ENCODE measurements at regions of chr17 and their contacts with region 1.

Region 1: GRCh38 chr17:50114849-50115357 is 15.1 kb downstream of the SAMD14 start:
- DNase-seq: peak in 6 of 9 donors; percentile 35 to 47 (median 41)
- ATAC-seq: peak; percentile 48
- H3K4me3 ChIP-seq: no peak overlapping the region
- H3K4me3 Mint-ChIP-seq: peak overlapping the region in 2 of 10 donors; percentile 5 to 32
- H3K27ac ChIP-seq: no peak overlapping the region
- H3K27ac Mint-ChIP-seq: peak overlapping the region in 2 of 9 donors; percentile 61 to 68
- H3K4me1 ChIP-seq: peaks cover 0 to 4% of the 10 kb centered on the region in 2 donors
- H3K4me1 Mint-ChIP-seq: peaks cover 7 to 18% (median 12%) of the 10 kb centered on the region in 7 donors
- H3K27me3 ChIP-seq: peaks cover 4 to 9% of the 10 kb centered on the region in 2 donors
- H3K27me3 Mint-ChIP-seq: peaks cover 14 to 44% (median 26%) of the 10 kb centered on the region in 5 donors

Region 2: DNA sequence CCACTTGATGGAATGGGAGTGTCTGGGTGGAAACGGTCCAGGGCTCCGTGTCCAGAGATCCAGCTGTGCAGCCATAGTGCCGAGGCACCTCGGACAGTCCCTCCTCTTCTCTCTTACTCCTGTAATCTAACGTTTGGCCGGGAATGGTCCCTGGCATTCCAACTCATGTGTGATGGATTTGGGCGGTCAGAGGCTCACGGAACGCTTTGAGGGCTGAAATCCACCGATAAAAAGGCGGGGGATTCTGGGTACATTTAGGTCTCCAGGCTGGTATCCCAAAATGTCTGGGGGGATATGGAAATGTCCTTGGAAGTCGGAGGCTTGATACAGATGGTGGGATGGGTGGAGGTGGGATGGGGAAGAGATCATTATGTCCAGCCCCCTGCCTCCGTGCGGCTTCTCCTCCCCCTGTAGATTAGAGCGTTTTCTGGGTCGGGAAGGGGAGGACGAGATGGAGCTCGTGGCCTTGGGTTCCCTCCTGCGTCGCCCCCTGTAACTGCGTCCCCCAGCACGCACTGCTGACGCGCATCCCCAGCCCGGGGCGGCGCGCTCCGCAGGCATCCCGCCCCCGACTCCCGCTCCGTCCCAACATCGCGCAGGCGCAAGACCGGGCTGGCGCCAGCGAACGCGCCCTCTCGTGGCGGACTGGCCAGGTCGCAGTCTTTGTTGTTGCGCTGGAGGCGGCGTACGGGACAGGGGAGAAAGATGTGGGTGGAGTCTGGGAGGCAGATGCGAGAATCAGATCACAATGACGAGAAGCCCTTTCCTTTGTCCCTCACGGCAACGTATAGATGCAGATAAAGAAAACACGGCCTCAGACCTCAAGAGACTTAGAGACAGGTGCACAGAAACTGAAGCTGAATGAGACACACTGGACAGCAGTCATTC is 46.4 kb after region 1 on chr17:
- CTCF ChIA-PET with region 1: interaction called, 8 read pairs
- POLR2A ChIA-PET with region 1: interaction called, 3 read pairs
- intact Hi-C with region 1: loop called (anchors 1 kb)
- DNase-seq: peak; percentile 89 to 98 (median 93)
- ATAC-seq: peak; percentile 99
- H3K4me3 ChIP-seq: peak overlapping the region; percentile 63
- H3K4me3 Mint-ChIP-seq: peak overlapping the region; percentile 66 to 87 (median 78)
- H3K27ac ChIP-seq: peak overlapping the region; percentile 70
- H3K27ac Mint-ChIP-seq: peak overlapping the region; percentile 64 to 99 (median 97)
- H3K4me1 ChIP-seq: peaks cover 18 to 34% of the 10 kb centered on the region in 2 donors
- H3K4me1 Mint-ChIP-seq: peaks cover 22 to 47% (median 39%) of the 10 kb centered on the region in 7 donors
- H3K27me3 ChIP-seq: no peaks in the 10 kb centered on the region
- H3K27me3 Mint-ChIP-seq: peaks cover 0 to 12% (median 0%) of the 10 kb centered on the region in 5 donors

Region 3: DNA sequence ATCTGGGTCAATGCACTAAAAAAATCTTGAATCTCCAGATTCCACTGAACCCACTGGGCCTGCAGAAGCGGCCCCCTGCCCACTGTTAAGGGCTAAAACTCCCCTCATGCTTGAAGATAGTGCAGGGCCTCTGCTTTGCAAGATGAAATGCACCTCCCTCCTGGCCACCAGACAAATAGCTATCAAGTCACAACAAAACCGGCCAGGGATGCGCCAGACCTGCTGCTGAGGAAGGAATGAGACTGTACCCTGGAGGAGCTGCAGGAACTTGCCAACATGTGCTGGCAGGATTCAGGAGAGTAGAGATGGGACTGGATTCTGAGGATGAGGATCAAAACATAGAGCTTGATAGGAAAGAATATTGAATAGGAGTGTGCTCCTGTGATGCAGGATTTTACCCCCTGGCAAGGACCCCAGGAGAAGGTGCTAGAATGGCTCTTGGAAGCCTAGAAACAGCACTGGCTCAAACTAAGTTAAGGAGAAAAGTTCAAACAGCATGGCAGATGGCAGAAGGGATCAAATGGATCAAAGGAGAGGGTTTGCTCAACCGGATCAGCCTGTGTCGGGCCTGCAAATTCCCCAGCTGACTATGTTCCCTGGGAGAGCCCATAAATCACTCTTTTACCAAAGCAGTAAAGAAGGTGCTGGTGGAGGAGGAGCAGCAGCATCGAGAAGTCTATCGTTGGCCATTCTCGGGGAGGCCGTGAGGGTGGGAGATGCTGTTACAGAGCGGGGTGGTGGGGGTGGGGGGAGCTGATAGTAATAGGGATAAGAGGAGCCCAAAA is 203.8 kb after region 1 on chr17:
- CTCF ChIA-PET with region 1: no interaction called
- POLR2A ChIA-PET with region 1: no interaction called
- intact Hi-C with region 1: no loop called
- DNase-seq: no peak
- ATAC-seq: no peak
- H3K4me3 ChIP-seq: no peak overlapping the region
- H3K4me3 Mint-ChIP-seq: no peak overlapping the region
- H3K27ac ChIP-seq: no peak overlapping the region
- H3K27ac Mint-ChIP-seq: no peak overlapping the region
- H3K4me1 ChIP-seq: no peaks in the 10 kb centered on the region
- H3K4me1 Mint-ChIP-seq: no peaks in the 10 kb centered on the region
- H3K27me3 ChIP-seq: no peaks in the 10 kb centered on the region
- H3K27me3 Mint-ChIP-seq: peaks cover 0 to 4% (median 2%) of the 10 kb centered on the region in 5 donors